Mammary epithelial cell (primary cell): ENCODE measurements at regions of chr10 and their contacts with region 1.

Region 1: DNA sequence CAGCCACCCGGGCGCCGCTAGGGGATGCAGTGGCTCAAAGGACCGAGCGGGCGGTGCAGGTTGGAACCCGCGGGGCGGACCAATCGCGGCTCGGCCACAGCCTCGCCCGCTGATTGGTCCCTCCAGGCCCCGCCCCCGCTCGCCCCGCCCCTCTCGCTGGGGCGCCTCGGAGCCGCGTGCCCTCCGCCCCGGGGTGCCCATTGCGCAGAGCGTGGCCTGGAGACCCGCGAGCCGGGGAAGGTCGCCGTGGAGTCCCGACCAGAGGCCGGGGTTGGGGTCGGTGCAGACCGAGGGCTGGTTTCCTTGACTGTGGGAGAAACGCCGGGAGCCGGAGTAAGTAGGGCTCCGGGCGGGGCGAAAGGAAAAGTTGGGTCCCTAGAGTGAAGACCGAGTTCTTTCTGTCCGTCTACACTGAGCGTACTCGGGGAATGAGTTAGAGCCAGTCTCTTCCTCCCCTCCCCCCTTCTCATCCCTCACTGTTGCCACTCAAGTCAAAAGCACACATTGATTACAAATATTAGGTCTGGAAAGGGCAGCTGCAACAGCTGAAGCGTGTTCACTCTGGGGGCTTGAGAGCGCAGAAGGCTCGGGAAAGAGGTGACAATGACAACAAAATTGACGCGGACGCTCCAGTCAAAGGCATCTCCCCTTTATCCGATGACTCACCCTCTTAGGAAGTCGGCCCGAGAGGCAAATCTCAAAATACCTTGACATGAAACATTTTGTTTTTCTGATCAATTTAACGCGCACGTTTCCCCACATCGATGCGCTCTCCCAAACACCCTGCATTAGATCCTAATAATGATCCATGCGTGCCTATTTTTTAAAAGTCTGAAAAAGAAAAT is 820 bp upstream of the GATA3 start:
- DNase-seq: peak; percentile 89
- H3K4me3 ChIP-seq: peak overlapping the region; percentile 86 to 90 (median 87)
- H3K27ac ChIP-seq: peak overlapping the region; percentile 70
- H3K4me1 ChIP-seq: peaks cover 46% of the 10 kb centered on the region
- H3K27me3 ChIP-seq: no peaks in the 10 kb centered on the region
- CTCF ChIP-seq: peak; percentile 71 to 97

Region 2: GRCh38 chr10:7756360-7756992 is 297.2 kb before region 1 on chr10:
- CTCF ChIA-PET with region 1: no interaction called
- dilution Hi-C with region 1: no loop called
- in situ Hi-C with region 1: no loop called
- intact Hi-C with region 1: loop called (anchors 5 kb)
- DNase-seq: peak; percentile 14
- H3K4me3 ChIP-seq: no peak overlapping the region
- H3K27ac ChIP-seq: no peak overlapping the region
- H3K4me1 ChIP-seq: no peaks in the 10 kb centered on the region
- H3K27me3 ChIP-seq: no peaks in the 10 kb centered on the region
- CTCF ChIP-seq: peak; percentile 30 to 57

Region 3: GRCh38 chr10:8075301-8076261 is 21.9 kb after region 1 on chr10:
- CTCF ChIA-PET with region 1: no interaction called
- dilution Hi-C with region 1: no loop called
- in situ Hi-C with region 1: no loop called
- intact Hi-C with region 1: no loop called
- DNase-seq: no peak
- H3K4me3 ChIP-seq: no peak overlapping the region
- H3K27ac ChIP-seq: no peak overlapping the region
- H3K4me1 ChIP-seq: peaks cover 13% of the 10 kb centered on the region
- H3K27me3 ChIP-seq: no peaks in the 10 kb centered on the region
- CTCF ChIP-seq: no peak

Region 4: DNA sequence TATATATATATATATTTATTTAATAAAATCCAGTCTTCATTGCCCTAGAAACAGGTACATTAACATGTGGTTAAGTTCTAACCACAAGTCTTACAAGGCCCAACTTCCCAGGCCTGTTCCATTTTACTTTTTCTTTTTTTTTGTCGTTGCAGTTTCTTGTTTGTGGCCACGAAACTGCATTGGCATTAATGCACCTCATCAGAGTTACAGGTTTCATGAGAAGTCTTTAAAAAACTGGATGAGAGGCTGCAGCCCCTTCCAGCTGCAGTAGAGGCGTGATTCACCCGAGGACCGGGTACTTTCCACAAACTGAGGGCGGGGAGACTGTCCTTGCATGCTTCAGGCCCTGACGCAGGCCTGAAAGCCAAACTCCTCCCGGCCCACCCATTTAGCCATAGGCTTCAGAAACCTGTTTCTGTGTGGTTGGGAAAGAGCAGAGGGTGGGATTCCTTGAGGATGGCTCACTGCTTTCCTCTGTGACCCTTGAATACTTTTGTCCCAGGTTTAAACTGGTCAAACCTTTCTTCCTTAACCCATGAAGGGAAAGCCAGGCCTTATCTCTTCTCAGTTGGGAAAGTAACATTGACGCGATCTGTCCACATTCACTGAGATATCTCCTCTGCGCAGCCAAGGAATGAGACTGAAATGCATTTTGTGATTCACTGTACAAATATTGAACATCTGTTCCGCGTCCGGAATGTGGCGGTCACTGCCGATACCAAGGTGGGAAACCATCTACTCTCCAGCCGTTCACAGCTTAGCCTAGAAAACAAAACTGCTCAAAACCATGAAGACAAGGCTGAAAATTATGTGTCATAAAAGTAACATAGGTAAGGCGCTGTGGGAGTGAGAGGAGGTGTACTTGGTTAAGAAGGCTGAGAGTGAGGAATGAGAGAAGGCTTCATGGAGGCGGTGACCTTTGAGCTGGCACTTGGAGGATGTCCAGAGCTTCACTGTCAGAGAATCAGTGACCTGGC is 312.6 kb after region 1 on chr10:
- CTCF ChIA-PET with region 1: no interaction called
- dilution Hi-C with region 1: no loop called
- in situ Hi-C with region 1: no loop called
- intact Hi-C with region 1: loop called (anchors 10 kb)
- DNase-seq: peak; percentile 99
- H3K4me3 ChIP-seq: no peak overlapping the region
- H3K27ac ChIP-seq: peak overlapping the region; percentile 59
- H3K4me1 ChIP-seq: peaks cover 23% of the 10 kb centered on the region
- H3K27me3 ChIP-seq: no peaks in the 10 kb centered on the region
- CTCF ChIP-seq: no peak

Region 5: DNA sequence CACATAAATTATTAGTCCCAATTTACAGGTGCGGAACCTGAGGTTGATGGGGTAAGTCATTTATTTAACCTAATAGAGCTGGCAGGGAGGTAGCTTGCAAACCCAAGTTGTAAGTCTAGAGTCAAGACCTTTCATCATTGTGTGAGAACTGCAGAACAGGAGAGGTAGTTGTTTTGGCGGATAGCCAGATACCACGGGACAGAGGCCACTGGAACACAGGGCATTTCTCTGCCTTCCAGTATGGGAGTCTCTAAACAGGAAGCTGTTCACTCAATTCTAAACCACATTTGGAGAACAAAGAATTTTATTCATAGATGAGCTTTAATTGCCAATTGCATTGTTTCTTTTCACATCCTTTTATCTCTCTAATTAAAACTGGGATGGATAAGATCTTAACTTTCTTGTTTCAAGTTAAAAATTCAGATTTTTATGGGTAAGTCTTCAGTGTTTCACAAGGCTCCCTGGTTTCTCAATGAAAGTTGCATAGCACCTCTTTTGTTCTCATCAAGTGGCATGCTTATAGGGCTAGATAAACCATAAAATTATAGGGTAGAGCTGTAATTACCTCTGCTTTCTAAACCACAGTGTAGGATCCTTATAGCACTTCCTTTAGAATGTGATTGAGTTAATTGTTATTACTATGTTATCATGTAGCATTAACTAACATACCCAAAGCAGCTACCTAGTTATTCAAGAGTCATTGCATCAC is 489.8 kb after region 1 on chr10:
- CTCF ChIA-PET with region 1: no interaction called
- dilution Hi-C with region 1: no loop called
- in situ Hi-C with region 1: no loop called
- intact Hi-C with region 1: loop called (anchors 5 kb)
- DNase-seq: peak; percentile 80
- H3K4me3 ChIP-seq: no peak overlapping the region
- H3K27ac ChIP-seq: peak overlapping the region; percentile 29
- H3K4me1 ChIP-seq: peaks cover 17% of the 10 kb centered on the region
- H3K27me3 ChIP-seq: no peaks in the 10 kb centered on the region
- CTCF ChIP-seq: no peak

Region 6: DNA sequence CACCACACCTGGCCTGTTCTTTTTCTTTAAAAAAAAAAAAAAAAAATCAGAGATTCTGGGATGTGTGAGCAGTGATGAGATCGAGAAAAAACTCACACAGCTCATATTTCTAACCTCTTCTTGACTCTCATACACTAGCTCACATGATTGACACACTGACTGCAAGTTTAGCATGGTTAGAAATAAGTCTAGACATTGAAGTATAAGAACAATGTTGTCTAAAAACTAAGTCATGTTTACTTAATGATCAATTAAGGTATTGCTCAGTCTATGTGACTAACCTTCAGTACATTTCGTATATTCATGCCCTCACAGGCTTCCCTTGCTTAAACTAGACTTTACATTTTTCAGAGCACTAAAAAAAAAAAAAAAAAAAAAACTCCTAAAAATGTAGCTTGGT is 775.9 kb after region 1 on chr10:
- CTCF ChIA-PET with region 1: no interaction called
- dilution Hi-C with region 1: no loop called
- in situ Hi-C with region 1: no loop called
- intact Hi-C with region 1: loop called (anchors 5 kb)
- DNase-seq: peak; percentile 90
- H3K4me3 ChIP-seq: no peak overlapping the region
- H3K27ac ChIP-seq: peak overlapping the region; percentile 63
- H3K4me1 ChIP-seq: peaks cover 22% of the 10 kb centered on the region
- H3K27me3 ChIP-seq: no peaks in the 10 kb centered on the region
- CTCF ChIP-seq: no peak

Region 7: DNA sequence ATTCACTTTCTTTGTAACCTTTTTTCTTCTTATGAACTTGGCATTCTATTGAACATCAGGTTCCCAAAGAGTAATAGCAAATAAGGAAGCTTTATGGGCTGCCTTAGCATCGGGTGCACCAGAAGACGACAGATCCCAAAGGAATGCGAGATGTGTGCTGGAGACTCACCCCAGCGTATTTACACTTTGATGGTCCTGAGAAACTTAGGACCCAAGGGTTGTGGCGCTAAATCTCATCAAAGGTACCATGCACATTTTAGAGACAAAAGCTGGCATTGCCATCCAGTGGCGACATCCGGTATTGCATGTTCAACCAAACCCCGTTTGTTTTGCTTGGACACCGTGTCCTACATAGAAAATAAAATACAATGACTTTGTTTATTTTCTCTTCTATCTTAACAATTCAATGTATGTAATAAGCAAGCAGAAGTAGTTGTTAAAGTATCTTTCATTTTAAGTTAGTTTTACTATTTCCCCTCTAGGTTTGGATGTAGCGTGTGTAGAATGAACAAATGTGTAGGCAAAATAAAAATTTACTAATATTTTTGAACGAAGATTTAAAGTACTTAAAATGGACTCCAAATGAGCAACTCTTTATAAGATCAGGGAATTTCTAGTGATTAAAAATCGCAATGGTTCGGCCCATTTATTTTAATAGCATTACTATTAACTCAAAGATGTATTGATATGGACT is 1155.6 kb after region 1 on chr10:
- CTCF ChIA-PET with region 1: no interaction called
- dilution Hi-C with region 1: no loop called
- in situ Hi-C with region 1: no loop called
- intact Hi-C with region 1: loop called (anchors 5 kb)
- DNase-seq: peak; percentile 46
- H3K4me3 ChIP-seq: no peak overlapping the region
- H3K27ac ChIP-seq: no peak overlapping the region
- H3K4me1 ChIP-seq: no peaks in the 10 kb centered on the region
- H3K27me3 ChIP-seq: no peaks in the 10 kb centered on the region
- CTCF ChIP-seq: peak; percentile 90